ENCODE measurements at regions of chr2 and their contacts with region 1.

Region 1: DNA sequence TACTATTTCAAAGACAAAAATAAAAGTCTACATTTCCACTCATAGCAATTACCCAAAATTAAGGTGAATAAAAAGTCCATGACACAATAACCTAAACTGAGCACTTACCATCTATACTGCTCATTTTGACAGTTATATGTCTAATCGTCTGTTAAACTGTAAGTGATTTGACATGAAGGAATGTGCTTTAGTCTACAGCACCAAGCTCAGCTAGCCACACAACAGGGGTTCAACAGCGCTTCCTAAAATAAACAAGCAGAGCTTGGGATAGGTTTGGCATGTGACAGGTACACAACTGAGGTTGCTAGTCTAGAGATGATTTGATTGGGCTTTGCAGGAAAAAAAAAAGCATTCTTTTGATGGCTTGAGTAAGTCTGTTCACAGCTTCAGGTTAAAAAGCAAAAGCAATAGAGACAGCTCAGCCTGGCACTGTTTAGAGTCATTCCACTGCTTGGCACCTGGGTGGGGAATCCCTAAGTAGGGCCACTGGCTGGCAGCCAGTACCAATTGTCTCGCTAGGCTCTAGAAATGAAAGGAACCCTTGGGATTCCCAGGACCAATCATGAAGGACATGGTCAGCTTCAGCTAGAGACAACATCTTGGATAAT is 78.6 kb downstream of the BARD1 start:
- DNase-seq: no peak
- H3K4me3 Mint-ChIP-seq: no peak overlapping the region
- H3K27ac Mint-ChIP-seq: no peak overlapping the region
- H3K4me1 Mint-ChIP-seq: no peaks in the 10 kb centered on the region
- H3K27me3 Mint-ChIP-seq: no peaks in the 10 kb centered on the region

Region 2: GRCh38 chr2:214328941-214329340 is 402.0 kb before region 1 on chr2:
- intact Hi-C with region 1: no loop called
- DNase-seq: no peak
- H3K4me3 Mint-ChIP-seq: no peak overlapping the region
- H3K27ac Mint-ChIP-seq: no peak overlapping the region
- H3K4me1 Mint-ChIP-seq: no peaks in the 10 kb centered on the region
- H3K27me3 Mint-ChIP-seq: no peaks in the 10 kb centered on the region

Region 3: DNA sequence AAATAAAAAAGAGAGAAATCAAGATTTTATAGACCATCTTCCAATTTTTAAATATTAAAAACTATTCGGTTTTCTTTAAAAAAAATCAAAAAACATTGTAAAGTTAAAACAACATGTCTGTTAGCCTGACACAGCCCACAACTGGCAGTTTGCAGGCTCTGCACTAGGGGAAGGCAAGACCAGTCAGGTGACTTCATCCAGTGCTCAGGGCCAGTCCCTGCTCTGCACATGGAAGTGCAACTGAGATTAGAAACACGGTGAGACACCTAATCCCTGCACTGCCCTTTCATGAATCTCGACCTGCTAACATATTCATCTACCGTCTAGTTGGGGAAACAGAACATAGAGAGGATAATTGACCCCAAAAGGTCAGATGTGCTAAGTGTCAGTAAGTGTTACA is 56.6 kb before region 1 on chr2:
- intact Hi-C with region 1: no loop called
- DNase-seq: no peak
- H3K4me3 Mint-ChIP-seq: no peak overlapping the region
- H3K27ac Mint-ChIP-seq: no peak overlapping the region
- H3K4me1 Mint-ChIP-seq: peaks cover 1% of the 10 kb centered on the region
- H3K27me3 Mint-ChIP-seq: no peaks in the 10 kb centered on the region

Region 4: DNA sequence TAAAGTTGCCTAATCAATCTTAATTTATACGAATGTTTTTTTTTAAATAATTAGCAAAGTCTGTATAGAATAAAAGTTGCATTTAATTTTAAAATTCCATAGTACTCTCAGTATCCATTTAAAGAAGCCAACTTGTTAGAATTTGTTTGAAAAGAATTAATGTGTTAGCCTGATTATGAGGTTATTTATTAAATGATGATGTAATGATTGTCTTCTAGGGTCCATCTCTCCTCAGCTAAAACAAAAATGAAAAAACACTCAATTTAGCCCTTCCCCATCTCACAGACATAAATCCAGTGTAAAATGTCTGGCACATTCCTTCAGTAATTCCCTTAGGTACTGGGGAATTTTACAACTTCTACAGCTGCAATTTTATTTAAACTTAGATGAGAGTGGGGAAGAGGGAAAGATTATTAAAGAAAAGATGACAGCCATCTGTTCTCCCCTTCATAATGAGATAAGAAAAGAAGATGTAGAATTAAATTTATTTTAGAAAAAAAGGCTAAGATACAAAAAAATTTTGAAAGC is 10.0 kb after region 1 on chr2:
- intact Hi-C with region 1: loop called (anchors 2 kb)
- DNase-seq: no peak
- H3K4me3 Mint-ChIP-seq: no peak overlapping the region
- H3K27ac Mint-ChIP-seq: no peak overlapping the region
- H3K4me1 Mint-ChIP-seq: peaks cover 17% of the 10 kb centered on the region
- H3K27me3 Mint-ChIP-seq: no peaks in the 10 kb centered on the region

Measured in activated T-helper 1 cell treated with anti-CD3 and anti-CD28 coated beads, Interleukin-12 subunit alpha, Interleukin-12 subunit beta, Interleukin-2, Interleukin-4 antibody, amounts not matched to agents 30 ng/mL and 10 ng/mL and 1 ng/mL, durations not matched to agents 14 hours and 24 hours and 36 hours (primary cell).